ENCODE measurements at regions of chr7 and their contacts with region 1.

Region 1: GRCh38 chr7:88546808-88547207 is 212.7 kb upstream of the ZNF804B start:
- DNase-seq: peak; percentile 50 to 85 (median 54)
- ATAC-seq: peak; percentile 98
- H3K4me3 ChIP-seq: no peak overlapping the region
- H3K27ac ChIP-seq: no peak overlapping the region
- H3K4me1 ChIP-seq: no peaks in the 10 kb centered on the region
- H3K27me3 ChIP-seq: no peaks in the 10 kb centered on the region
- CTCF ChIP-seq: peak; percentile 73 to 88 (median 86)
- EP300 ChIP-seq: no peak
- POLR2A ChIP-seq: no peak
- RAD21 ChIP-seq: peak; percentile 98 to 99

Region 2: DNA sequence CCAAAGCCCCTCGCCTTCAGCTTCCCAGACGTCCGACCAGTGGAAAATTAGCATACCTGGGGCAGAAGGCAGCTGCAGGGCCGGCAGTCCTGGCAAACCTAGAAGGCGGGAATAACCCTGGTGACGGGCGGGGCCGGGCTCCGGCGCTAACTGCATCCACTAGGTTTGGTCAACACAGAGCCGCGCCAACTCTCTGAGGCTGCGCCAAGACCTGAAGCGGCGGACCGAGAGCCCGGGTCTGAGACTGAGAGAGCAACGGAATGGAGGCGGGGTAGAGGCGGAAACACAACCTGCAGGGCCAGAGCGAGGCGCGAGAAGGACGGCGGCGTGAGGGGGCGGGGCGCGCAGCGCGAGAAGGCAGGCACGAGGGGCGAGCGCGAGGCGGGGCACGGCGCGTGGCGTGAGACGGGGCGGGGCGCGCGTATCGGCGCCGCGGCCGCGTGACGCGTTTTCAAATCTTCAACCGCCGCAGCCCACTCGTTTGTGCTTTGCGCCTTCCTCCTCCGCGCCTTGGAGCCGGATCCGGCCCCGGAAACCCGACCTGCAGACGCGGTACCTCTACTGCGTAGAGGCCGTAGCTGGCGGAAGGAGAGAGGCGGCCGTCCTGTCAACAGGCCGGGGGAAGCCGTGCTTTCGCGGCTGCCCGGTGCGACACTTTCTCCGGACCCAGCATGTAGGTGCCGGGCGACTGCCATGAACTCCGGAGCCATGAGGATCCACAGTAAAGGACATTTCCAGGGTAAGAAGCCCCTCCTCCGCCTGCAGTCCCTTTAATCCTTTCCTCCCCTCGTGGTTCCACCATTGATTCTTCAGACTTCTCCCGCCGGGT is 670.6 kb before region 1 on chr7 and contains the starts of genes DBF4 and SLC25A40:
- CTCF ChIA-PET with region 1: no interaction called
- POLR2A ChIA-PET with region 1: no interaction called
- in situ Hi-C with region 1: no loop called
- intact Hi-C with region 1: no loop called
- DNase-seq: peak; percentile 92 to 98 (median 93)
- ATAC-seq: peak; percentile 86
- H3K4me3 ChIP-seq: peak within 1 kb of the TSS; percentile 86
- H3K27ac ChIP-seq: peak within 1 kb of the TSS; percentile 92
- H3K4me1 ChIP-seq: peaks cover 10% of the 10 kb centered on the region in 2 experiments; a peak in 4 of 5 replicates
- H3K27me3 ChIP-seq: no peaks in the 10 kb centered on the region
- CTCF ChIP-seq: no peak
- EP300 ChIP-seq: peak; percentile 57; the same call in 1 of the 2 replicates
- POLR2A ChIP-seq: peak; percentile 92
- RAD21 ChIP-seq: no peak
- polyA plus RNA-seq, gene DBF4: 38.4 to 43.5 TPM
- polyA plus RNA-seq, gene SLC25A40: 19.0 to 25.1 TPM

Region 3: DNA sequence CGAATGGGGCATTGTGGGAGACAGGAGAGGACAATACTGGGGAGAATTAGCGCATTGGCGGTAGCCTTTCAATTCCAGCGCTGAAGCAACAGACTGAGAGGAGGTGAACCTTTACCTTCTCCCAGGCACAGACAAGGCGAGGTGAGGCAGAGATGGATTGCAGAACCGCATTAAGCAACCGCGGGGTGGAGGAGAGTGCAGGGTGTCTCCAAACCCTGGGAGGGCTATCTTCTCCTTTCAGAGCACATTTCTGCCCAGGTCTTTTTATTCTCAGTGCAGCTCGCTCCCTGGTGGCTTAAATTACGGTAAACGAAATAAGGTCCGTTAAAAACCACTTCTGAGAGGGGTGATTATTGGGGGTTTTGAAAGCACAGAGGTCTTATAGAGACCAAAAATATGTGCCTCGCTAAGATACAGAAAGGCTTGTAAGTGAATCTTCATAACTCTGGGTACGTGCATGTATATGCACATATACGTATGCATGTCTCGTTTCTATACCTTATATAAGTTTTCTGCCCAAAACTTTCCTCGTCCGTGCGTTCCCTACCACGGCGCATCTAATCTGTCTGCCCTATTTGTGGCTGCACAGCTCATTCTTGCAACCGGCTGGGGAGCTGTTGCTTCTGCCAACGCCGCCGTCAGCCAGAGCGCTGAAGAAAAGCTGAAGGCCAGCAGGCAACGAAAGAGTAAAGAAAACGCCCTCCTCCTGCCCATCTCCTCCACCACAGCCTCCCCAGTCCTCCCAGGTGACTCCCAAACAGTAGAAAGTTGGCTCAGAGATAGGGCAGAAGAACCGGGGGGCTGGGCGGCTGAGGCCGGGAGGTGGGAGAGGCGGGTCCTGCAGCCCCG is 211.8 kb after region 1 on chr7:
- CTCF ChIA-PET with region 1: no interaction called
- POLR2A ChIA-PET with region 1: no interaction called
- in situ Hi-C with region 1: no loop called
- intact Hi-C with region 1: loop called (anchors 1 kb)
- DNase-seq: peak in 2 of 4 experiments; percentile 16 to 44
- ATAC-seq: peak; percentile 71
- H3K4me3 ChIP-seq: peak overlapping the region; percentile 45
- H3K27ac ChIP-seq: no peak overlapping the region
- H3K4me1 ChIP-seq: peaks cover 3 to 12% of the 10 kb centered on the region in 2 experiments; a peak in 4 of 5 replicates
- H3K27me3 ChIP-seq: no peaks in the 10 kb centered on the region
- CTCF ChIP-seq: peak in 1 of 3 experiments; percentile 32; a peak in 2 of 6 replicates
- EP300 ChIP-seq: no peak
- POLR2A ChIP-seq: no peak
- RAD21 ChIP-seq: peak; percentile 35 to 39

Region 4: DNA sequence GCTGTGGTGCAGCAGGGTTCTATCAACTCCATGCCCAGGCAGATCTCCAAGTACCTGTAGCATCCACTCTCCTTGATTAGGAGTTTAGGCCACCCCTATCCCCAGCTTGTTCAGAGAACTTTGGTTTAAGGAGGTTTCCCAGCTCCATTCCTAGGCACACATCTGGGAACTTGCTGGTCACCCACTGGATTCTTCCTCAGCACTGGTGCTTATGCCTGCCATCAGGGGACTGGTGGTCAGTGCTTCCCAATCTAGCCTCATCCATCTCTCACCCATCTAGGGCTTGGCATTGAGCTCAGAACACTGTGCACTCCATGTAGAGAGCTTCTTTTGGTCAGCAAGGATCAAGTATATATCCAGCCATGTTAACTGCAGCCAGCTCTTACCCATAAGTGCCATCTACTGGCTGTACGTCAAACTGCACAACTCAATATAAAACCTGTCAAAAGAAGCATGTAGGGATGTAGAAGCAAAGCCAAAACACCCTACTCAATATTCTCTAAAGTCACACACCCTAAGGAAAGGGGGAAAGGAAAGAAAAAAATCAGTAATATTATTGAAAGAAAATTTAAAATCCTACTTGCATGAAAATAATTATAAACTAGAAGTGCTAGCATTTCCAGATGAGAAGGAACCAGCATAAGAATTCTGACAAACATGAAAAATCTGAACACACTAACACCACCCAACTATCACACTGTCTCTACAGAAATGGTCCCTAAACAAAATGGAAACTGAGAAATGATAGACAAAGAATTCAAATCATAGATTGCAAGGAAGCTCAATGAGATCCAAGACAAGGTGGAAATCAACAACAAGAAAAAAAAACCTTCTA is 1076.2 kb after region 1 on chr7:
- CTCF ChIA-PET with region 1: interaction called, 3 read pairs
- POLR2A ChIA-PET with region 1: no interaction called
- in situ Hi-C with region 1: loop called (anchors 10 kb)
- intact Hi-C with region 1: loop called (anchors 1 kb)
- DNase-seq: peak in 1 of 4 experiments; percentile 18
- ATAC-seq: peak; percentile 54; the same call in 2 of the 3 replicates
- H3K4me3 ChIP-seq: no peak overlapping the region
- H3K27ac ChIP-seq: no peak overlapping the region
- H3K4me1 ChIP-seq: no peaks in the 10 kb centered on the region
- H3K27me3 ChIP-seq: no peaks in the 10 kb centered on the region
- CTCF ChIP-seq: peak; percentile 23 to 58 (median 57); a peak in 5 of 6 replicates
- EP300 ChIP-seq: no peak
- POLR2A ChIP-seq: no peak
- RAD21 ChIP-seq: peak; percentile 33 to 57; a peak in 3 of 4 replicates

Region 5: DNA sequence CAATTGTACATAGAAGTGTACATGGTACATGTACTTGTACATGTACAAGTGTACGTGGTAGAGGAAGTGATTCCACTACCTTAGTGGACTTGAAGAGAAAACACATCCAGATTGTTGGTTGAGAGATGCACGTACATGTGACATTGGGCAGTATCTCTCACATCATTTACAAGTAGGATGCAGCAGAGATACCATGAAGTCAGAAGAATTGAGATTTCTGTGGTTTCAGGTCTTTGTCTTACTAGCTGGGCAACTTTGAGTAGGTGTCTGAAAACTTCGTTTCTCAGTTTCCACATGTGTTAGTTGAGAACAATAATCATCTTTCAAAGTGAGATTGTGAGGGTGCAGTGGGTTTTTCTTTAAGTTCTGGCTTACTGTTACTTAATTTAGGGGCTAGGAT is 1877.9 kb after region 1 on chr7:
- CTCF ChIA-PET with region 1: interaction called, 3 read pairs
- POLR2A ChIA-PET with region 1: no interaction called
- in situ Hi-C with region 1: no loop called
- intact Hi-C with region 1: loop called (anchors 2 kb)
- DNase-seq: no peak
- ATAC-seq: no peak
- H3K4me3 ChIP-seq: no peak overlapping the region
- H3K27ac ChIP-seq: no peak overlapping the region
- H3K4me1 ChIP-seq: no peaks in the 10 kb centered on the region
- H3K27me3 ChIP-seq: no peaks in the 10 kb centered on the region; a peak in 1 of 5 replicates
- CTCF ChIP-seq: no peak
- EP300 ChIP-seq: no peak
- POLR2A ChIP-seq: no peak
- RAD21 ChIP-seq: no peak